ENCODE measurements at regions of chr1 and their contacts with region 1.

Region 1: GRCh38 chr1:40338745-40339424 is 21.8 kb upstream of the COL9A2 start:
- DNase-seq: peak; percentile 66 to 95
- H3K4me3 ChIP-seq: no peak overlapping the region
- CTCF ChIP-seq: peak in 2 of 3 donors; percentile 77 to 89
- POLR2A ChIP-seq: no peak

Region 2: DNA sequence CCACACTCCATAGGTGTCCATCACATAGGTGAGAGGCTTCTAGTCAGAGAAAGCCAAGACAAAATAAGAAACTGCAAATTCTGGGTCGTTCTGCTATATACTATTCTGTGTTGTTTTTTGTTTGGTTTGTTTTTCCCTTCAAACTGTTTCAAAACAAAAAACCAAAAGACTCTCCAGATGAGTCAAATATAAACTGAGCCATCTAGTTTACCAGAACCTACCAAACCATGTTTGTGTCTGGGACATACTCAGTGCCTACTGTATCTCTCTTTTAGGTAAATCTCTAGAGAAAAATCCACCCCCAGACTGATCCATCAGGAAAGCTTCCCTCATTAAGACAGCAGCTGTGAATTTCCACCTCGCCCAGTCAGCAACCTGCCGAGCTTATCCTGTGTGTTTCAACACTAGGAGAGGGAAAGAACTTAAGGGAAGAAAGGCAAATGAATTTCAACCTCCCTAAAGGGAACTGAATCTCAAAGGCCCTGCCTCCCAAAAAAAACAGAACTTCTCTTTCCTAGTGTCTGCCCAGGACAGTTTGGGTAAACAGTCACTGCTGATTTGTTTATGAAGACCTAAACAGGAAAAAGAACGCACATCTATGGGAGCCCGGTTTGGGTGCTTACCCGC is 259.0 kb before region 1 on chr1:
- intact Hi-C with region 1: loop called (anchors 10 kb)
- DNase-seq: no peak
- H3K4me3 ChIP-seq: no peak overlapping the region
- CTCF ChIP-seq: no peak
- POLR2A ChIP-seq: no peak

Region 3: GRCh38 chr1:40153073-40153770 is 185.7 kb before region 1 on chr1:
- intact Hi-C with region 1: loop called (anchors 5 kb)
- DNase-seq: no peak
- H3K4me3 ChIP-seq: no peak overlapping the region
- CTCF ChIP-seq: peak in 1 of 3 donors; percentile 38
- POLR2A ChIP-seq: no peak

Measured in lower leg skin (tissue), 4 donors.